Sigmoid colon (tissue), 7 donors: ENCODE measurements at regions of chr2 and their contacts with region 1.

Region 1: DNA sequence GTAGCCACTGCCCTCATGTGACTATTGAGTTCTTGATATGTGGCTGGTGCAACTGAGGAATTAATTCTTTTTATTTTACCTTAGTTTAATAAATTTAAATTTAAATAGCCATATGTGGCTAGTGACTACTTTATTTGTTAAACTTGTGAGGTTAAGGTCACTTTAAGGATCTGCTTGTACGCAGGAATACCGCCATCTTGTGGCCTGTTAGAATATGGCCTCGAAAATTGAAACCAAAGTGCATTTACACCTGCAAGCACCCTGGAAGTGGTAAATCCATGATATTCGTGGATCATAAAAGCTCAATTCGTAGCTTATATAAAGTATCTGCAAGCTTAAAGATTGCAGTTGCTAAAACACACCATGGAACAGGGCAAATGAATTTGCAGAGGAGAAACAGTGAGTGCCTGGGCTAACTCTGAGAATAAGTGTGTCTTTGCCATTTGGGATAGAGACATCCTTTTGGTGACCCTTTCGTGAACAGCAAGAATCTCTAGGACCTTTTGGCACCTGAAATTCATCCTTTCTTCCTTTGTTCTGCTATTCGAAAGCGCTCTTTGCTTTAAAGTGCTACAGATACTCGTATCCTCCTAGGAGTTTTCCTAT is 59.9 kb upstream of the REG3A start:
- DNase-seq: no peak
- H3K4me3 ChIP-seq: no peak overlapping the region
- H3K27ac ChIP-seq: no peak overlapping the region
- H3K4me1 ChIP-seq: no peaks in the 10 kb centered on the region
- H3K27me3 ChIP-seq: no peaks in the 10 kb centered on the region
- CTCF ChIP-seq: peak in 2 of 4 experiments; percentile 18 to 58
- EP300 ChIP-seq: no peak
- POLR2A ChIP-seq: no peak

Region 2: GRCh38 chr2:79041032-79041448 is 178.4 kb before region 1 on chr2:
- intact Hi-C with region 1: loop called (anchors 5 kb)
- DNase-seq: no peak
- H3K4me3 ChIP-seq: no peak overlapping the region
- H3K27ac ChIP-seq: no peak overlapping the region
- H3K4me1 ChIP-seq: no peaks in the 10 kb centered on the region
- H3K27me3 ChIP-seq: no peaks in the 10 kb centered on the region
- CTCF ChIP-seq: peak in 3 of 4 experiments; percentile 18 to 31 (median 30)
- EP300 ChIP-seq: no peak
- POLR2A ChIP-seq: no peak

Region 3: DNA sequence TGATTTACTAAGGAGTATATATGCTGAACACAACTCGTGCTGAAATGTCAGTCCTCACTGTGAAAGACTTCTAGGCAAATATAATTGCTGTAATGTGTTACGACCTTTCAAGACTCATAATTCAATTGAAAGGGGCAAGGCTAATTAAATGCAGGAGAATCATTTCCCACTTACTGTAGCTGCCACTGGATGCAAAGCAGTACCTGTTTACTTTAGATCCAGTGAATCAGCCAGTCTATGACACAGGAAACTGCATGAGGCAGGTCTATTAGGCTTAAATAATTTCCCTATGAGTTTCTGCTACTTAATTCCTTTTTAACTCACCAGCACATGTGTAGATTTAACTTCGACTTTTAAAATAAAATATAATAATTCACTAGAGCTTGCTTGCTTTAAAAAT is 418.9 kb after region 1 on chr2:
- intact Hi-C with region 1: no loop called
- DNase-seq: no peak
- H3K4me3 ChIP-seq: no peak overlapping the region
- H3K27ac ChIP-seq: no peak overlapping the region
- H3K4me1 ChIP-seq: no peaks in the 10 kb centered on the region
- H3K27me3 ChIP-seq: no peaks in the 10 kb centered on the region
- CTCF ChIP-seq: no peak
- EP300 ChIP-seq: no peak
- POLR2A ChIP-seq: no peak